CD4-positive, alpha-beta T cell (primary cell): ENCODE measurements at regions of chr19 and their contacts with region 1.

Region 1: GRCh38 chr19:48965040-48965805 is at the start of gene FTL:
- DNase-seq: peak; percentile 71 to 94 (median 88)
- ATAC-seq: peak; percentile 78
- H3K4me3 ChIP-seq: peak within 1 kb of the TSS; percentile 85
- H3K4me3 Mint-ChIP-seq: peak within 1 kb of the TSS; percentile 97
- H3K27ac ChIP-seq: peak within 1 kb of the TSS; percentile 67 to 71
- H3K27ac Mint-ChIP-seq: peak within 1 kb of the TSS; percentile 97
- H3K4me1 ChIP-seq: peaks cover 55% of the 10 kb centered on the region
- H3K4me1 Mint-ChIP-seq: peaks cover 47% of the 10 kb centered on the region
- H3K27me3 ChIP-seq: peaks cover 0 to 2% of the 10 kb centered on the region in 2 experiments
- H3K27me3 Mint-ChIP-seq: no peaks in the 10 kb centered on the region
- CTCF ChIP-seq: no peak
- total RNA-seq, gene FTL: 616 to 627 TPM

Region 2: GRCh38 chr19:48858984-48859710 is 106.1 kb before region 1 on chr19:
- CTCF ChIA-PET with region 1: interaction called, 7 read pairs
- POLR2A ChIA-PET with region 1: interaction called, 4 read pairs
- intact Hi-C with region 1: loop called in 1 of 2 experiments (anchors 5 kb)
- DNase-seq: peak; percentile 64 to 89 (median 78)
- ATAC-seq: peak; percentile 83
- H3K4me3 ChIP-seq: peak overlapping the region; percentile 51
- H3K4me3 Mint-ChIP-seq: peak overlapping the region; percentile 95
- H3K27ac ChIP-seq: no peak overlapping the region
- H3K27ac Mint-ChIP-seq: peak overlapping the region; percentile 47
- H3K4me1 ChIP-seq: peaks cover 20% of the 10 kb centered on the region
- H3K4me1 Mint-ChIP-seq: peaks cover 5% of the 10 kb centered on the region
- H3K27me3 ChIP-seq: no peaks in the 10 kb centered on the region
- H3K27me3 Mint-ChIP-seq: no peaks in the 10 kb centered on the region
- CTCF ChIP-seq: no peak

Region 3: DNA sequence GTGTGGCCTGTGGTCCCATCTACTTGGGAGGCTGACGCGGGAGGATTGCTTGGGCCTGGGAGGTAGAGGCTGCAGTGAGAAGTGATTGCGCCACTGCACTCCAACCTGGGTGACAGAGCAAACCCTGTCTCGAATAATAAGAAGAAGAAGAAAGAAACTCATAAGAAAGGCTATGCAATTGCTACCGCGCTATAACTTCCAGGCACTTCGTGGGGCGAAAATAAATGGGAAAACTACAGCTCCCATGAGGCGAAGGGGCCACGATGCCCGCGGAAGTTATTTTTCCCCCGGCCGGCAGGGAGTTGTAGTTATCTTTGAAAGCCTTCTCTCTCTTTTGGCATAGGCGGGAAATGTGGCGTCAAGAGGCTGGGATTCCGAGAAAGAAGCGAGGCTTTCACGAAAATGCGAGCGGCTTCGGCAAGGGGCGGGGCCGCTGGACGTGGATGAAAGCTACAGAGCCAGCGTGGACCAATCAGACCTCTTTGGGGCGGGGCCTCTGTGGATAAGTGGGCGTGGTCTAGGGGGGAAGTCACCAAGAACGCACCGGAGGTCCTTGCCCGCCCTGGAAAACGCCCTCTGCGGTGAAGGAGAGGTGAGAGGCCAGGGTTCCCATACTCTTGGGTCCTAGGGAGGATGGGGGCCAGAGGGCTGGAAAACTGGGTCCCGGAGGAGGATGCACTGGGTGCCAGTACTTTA is 65.3 kb before region 1 on chr19 and contains the start of gene NUCB1:
- CTCF ChIA-PET with region 1: interaction called, 11 read pairs
- POLR2A ChIA-PET with region 1: interaction called, 26 read pairs
- intact Hi-C with region 1: loop called in 1 of 2 experiments (anchors 2 kb)
- DNase-seq: peak; percentile 96 to 99 (median 99)
- ATAC-seq: peak; percentile 93
- H3K4me3 ChIP-seq: peak within 1 kb of the TSS; percentile 92
- H3K4me3 Mint-ChIP-seq: peak within 1 kb of the TSS; percentile 95
- H3K27ac ChIP-seq: peak within 1 kb of the TSS; percentile 65 to 72
- H3K27ac Mint-ChIP-seq: peak within 1 kb of the TSS; percentile 88
- H3K4me1 ChIP-seq: peaks cover 51% of the 10 kb centered on the region
- H3K4me1 Mint-ChIP-seq: peaks cover 37% of the 10 kb centered on the region
- H3K27me3 ChIP-seq: peaks cover 3 to 10% of the 10 kb centered on the region in 2 experiments
- H3K27me3 Mint-ChIP-seq: peaks cover 6% of the 10 kb centered on the region
- CTCF ChIP-seq: no peak
- total RNA-seq, gene NUCB1: 73.7 to 77.0 TPM

Region 4: DNA sequence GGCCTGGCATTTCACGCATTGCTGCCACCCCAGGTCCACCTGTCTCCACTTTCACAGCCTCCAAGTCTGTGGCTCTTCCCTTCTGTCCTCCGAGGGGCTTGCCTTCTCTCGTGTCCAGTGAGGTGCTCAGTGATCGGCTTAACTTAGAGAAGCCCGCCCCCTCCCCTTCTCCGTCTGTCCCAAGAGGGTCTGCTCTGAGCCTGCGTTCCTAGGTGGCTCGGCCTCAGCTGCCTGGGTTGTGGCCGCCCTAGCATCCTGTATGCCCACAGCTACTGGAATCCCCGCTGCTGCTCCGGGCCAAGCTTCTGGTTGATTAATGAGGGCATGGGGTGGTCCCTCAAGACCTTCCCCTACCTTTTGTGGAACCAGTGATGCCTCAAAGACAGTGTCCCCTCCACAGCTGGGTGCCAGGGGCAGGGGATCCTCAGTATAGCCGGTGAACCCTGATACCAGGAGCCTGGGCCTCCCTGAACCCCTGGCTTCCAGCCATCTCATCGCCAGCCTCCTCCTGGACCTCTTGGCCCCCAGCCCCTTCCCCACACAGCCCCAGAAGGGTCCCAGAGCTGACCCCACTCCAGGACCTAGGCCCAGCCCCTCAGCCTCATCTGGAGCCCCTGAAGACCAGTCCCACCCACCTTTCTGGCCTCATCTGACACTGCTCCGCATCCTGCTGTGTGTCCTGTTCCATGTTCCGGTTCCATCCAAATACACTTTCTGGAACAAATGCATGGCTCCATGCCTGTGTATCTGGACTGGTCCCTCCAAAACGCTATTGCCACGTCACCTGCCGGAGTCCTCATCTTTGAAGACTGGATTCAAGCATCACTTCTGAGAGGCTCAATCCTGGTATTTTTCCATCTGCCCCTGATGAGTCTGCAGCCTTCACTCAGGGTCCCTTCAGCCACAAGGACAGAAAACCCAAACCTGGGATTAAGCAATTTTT is 42.4 kb before region 1 on chr19:
- CTCF ChIA-PET with region 1: no interaction called
- POLR2A ChIA-PET with region 1: no interaction called
- intact Hi-C with region 1: no loop called
- DNase-seq: no peak
- ATAC-seq: no peak
- H3K4me3 ChIP-seq: no peak overlapping the region
- H3K4me3 Mint-ChIP-seq: no peak overlapping the region
- H3K27ac ChIP-seq: no peak overlapping the region
- H3K27ac Mint-ChIP-seq: no peak overlapping the region
- H3K4me1 ChIP-seq: peaks cover 5% of the 10 kb centered on the region
- H3K4me1 Mint-ChIP-seq: peaks cover 10% of the 10 kb centered on the region
- H3K27me3 ChIP-seq: no peaks in the 10 kb centered on the region
- H3K27me3 Mint-ChIP-seq: no peaks in the 10 kb centered on the region
- CTCF ChIP-seq: no peak

Region 5: GRCh38 chr19:48943081-48943480 is 22.1 kb before region 1 on chr19:
- CTCF ChIA-PET with region 1: no interaction called
- POLR2A ChIA-PET with region 1: no interaction called
- intact Hi-C with region 1: no loop called
- DNase-seq: no peak
- ATAC-seq: no peak
- H3K4me3 ChIP-seq: no peak overlapping the region
- H3K4me3 Mint-ChIP-seq: no peak overlapping the region
- H3K27ac ChIP-seq: no peak overlapping the region
- H3K27ac Mint-ChIP-seq: no peak overlapping the region
- H3K4me1 ChIP-seq: no peaks in the 10 kb centered on the region
- H3K4me1 Mint-ChIP-seq: no peaks in the 10 kb centered on the region
- H3K27me3 ChIP-seq: no peaks in the 10 kb centered on the region
- H3K27me3 Mint-ChIP-seq: no peaks in the 10 kb centered on the region
- CTCF ChIP-seq: no peak

Region 6: GRCh38 chr19:48954595-48955310 is 10.5 kb before region 1 on chr19 and contains the start of gene BAX:
- CTCF ChIA-PET with region 1: no interaction called
- POLR2A ChIA-PET with region 1: interaction called, 38 read pairs
- intact Hi-C with region 1: loop called in 1 of 2 experiments (anchors 1 kb)
- DNase-seq: peak; percentile 67 to 91 (median 80)
- ATAC-seq: peak; percentile 83
- H3K4me3 ChIP-seq: peak within 1 kb of the TSS; percentile 99
- H3K4me3 Mint-ChIP-seq: peak within 1 kb of the TSS; percentile 90
- H3K27ac ChIP-seq: peak within 1 kb of the TSS; percentile 69 to 90
- H3K27ac Mint-ChIP-seq: peak within 1 kb of the TSS; percentile 72
- H3K4me1 ChIP-seq: peaks cover 25% of the 10 kb centered on the region
- H3K4me1 Mint-ChIP-seq: peaks cover 31% of the 10 kb centered on the region
- H3K27me3 ChIP-seq: no peaks in the 10 kb centered on the region
- H3K27me3 Mint-ChIP-seq: no peaks in the 10 kb centered on the region
- CTCF ChIP-seq: no peak
- total RNA-seq, gene BAX: 52.9 to 60.4 TPM

Region 7: DNA sequence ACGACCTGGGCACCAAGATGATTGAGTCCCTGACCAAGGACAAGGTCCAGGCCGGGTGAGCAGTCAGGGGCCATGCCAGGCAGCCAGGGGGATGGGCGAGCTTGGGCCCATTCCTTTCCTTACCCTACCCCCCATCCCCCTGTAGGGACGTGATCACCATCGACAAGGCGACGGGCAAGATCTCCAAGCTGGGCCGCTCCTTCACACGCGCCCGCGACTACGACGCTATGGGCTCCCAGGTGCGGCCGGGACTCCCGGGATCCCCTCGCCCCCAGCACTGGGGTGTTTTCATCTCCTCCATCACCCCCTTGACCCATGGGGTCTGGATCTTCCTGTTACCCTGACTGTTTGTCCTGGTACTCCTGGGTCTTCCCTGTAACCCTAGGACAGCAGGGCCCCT is 44.6 kb after region 1 on chr19:
- CTCF ChIA-PET with region 1: no interaction called
- POLR2A ChIA-PET with region 1: no interaction called
- intact Hi-C with region 1: no loop called
- DNase-seq: no peak
- ATAC-seq: no peak
- H3K4me3 ChIP-seq: no peak overlapping the region
- H3K4me3 Mint-ChIP-seq: no peak overlapping the region
- H3K27ac ChIP-seq: no peak overlapping the region
- H3K27ac Mint-ChIP-seq: no peak overlapping the region
- H3K4me1 ChIP-seq: no peaks in the 10 kb centered on the region
- H3K4me1 Mint-ChIP-seq: no peaks in the 10 kb centered on the region
- H3K27me3 ChIP-seq: no peaks in the 10 kb centered on the region
- H3K27me3 Mint-ChIP-seq: no peaks in the 10 kb centered on the region
- CTCF ChIP-seq: no peak

Region 8: DNA sequence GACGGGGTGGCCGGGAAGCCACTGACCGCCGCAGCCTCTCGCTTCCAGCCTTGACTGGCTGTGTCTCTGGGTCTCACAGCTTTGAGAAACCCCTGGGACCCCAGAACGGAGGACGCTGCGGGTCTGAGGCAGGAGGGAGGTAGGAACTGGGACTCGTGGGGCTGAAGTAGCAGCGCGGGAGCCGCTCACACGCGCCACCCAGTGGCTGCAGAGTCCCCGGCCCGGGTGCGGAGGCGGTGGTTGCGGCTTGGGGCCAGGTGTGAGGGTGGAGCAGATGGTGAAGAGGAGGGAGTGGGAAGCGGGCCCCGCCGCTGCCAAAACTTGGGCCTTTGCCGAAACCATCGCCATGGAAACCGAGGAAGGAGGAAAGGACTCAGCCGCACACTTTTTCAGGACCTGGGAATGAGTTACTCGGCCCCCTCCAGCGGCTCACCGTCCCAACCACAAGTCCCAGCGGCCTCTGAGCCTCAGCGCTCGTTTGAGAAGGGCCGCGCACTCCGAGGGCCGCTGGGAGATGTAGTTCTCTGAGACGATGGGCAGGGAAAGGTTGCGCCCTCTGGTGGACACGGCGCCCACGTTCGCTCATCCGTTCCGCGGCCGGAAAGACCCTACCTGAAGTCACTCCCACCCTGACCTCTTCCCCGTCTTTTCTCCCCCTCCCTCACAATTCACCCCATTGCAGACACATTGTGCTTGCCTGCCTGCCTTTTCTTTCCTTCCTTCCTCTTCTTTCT is 478.3 kb after region 1 on chr19:
- CTCF ChIA-PET with region 1: no interaction called
- POLR2A ChIA-PET with region 1: no interaction called
- intact Hi-C with region 1: no loop called
- DNase-seq: peak; percentile 89 to 96 (median 91)
- ATAC-seq: peak; percentile 89
- H3K4me3 ChIP-seq: peak overlapping the region; percentile 66
- H3K4me3 Mint-ChIP-seq: peak overlapping the region; percentile 85
- H3K27ac ChIP-seq: no peak overlapping the region
- H3K27ac Mint-ChIP-seq: peak overlapping the region; percentile 84
- H3K4me1 ChIP-seq: peaks cover 47% of the 10 kb centered on the region
- H3K4me1 Mint-ChIP-seq: peaks cover 41% of the 10 kb centered on the region
- H3K27me3 ChIP-seq: peaks cover 39% of the 10 kb centered on the region in 2 experiments
- H3K27me3 Mint-ChIP-seq: peaks cover 47% of the 10 kb centered on the region
- CTCF ChIP-seq: peak; percentile 95